T-cell (primary cell): ENCODE measurements at regions of chr2 and their contacts with region 1.

Region 1: DNA sequence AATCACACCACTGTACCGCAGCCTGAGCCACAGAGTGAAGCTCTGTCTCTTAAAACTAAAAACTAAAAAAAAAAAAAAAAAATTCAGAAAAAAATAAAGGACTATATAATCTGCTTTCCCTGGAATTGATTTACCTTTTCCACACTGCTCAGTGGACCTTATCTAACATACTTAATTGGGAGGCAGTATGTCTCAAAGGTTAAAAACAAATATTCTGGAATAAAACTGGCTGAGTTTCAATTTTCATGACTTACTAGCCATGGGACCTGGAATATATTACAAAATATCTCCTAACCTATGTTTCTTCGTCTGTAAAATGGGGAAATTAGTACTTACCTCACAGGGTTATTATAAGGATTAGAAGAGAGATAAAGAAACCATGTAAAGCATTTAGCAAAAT is 11.8 kb downstream of the NCKAP1 start:
- DNase-seq: no peak
- ATAC-seq: no peak
- H3K4me3 ChIP-seq: no peak overlapping the region
- H3K4me3 Mint-ChIP-seq: no peak overlapping the region
- H3K27ac ChIP-seq: no peak overlapping the region
- H3K27ac Mint-ChIP-seq: no peak overlapping the region
- H3K4me1 ChIP-seq: no peaks in the 10 kb centered on the region
- H3K4me1 Mint-ChIP-seq: no peaks in the 10 kb centered on the region
- H3K27me3 ChIP-seq: peaks cover 8 to 11% of the 10 kb centered on the region in 2 experiments
- H3K27me3 Mint-ChIP-seq: peaks cover 12 to 37% of the 10 kb centered on the region in 2 donors

Region 2: DNA sequence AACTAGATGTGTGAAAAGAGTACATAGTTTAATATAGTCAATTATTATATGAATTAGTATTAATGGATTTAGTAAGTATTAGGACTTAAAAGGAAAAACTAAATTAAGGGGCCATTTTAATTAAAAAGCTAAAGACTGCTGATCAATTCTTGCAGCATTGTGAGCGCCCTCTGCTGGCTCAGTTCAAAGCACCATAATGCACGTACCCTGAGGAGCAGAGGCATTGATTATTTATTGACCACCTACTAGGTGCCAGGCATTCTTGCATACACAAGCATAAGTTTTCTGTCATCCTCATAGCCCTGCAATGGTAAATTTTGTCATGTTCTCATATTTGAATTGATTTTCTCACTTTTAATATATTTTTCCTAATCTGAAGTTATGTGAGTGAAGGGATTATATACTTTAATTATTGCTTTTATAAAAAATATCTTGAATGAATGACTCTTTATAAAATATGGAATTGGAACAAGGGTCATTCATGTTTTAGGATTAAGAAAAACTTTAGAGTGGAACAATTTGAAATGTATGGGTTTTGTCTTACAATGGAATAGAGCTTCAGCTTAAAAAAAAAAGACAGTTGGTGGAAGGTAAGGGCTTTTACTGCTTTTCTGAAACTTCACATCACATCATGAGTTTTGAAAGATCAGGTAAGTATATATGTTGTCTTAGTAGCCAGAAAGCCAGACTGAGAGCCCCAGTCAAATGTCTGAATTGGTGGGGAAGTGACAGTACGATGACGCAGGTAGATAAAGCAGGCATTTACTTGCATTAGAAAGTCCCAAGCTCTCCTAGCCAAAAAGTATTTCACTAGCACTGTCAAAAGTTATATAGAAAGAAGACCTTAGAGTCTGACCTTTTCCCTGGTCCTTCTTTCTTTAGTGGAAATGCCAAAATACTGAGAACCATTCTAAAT is 1559.5 kb before region 1 on chr2:
- CTCF ChIA-PET with region 1: no interaction called
- POLR2A ChIA-PET with region 1: interaction called in 1 of 2 experiments, 10 read pairs
- DNase-seq: peak; percentile 42 to 90 (median 72)
- ATAC-seq: peak in 1 of 4 experiments; percentile 79
- H3K4me3 ChIP-seq: peak overlapping the region in 1 of 2 donors; percentile 0
- H3K4me3 Mint-ChIP-seq: peak overlapping the region; percentile 40 to 57 (median 50)
- H3K27ac ChIP-seq: peak overlapping the region; percentile 58
- H3K27ac Mint-ChIP-seq: peak overlapping the region; percentile 23 to 71
- H3K4me1 ChIP-seq: peaks cover 36 to 75% of the 10 kb centered on the region in 2 experiments
- H3K4me1 Mint-ChIP-seq: peaks cover 85 to 91% (median 88%) of the 10 kb centered on the region in 3 donors
- H3K27me3 ChIP-seq: no peaks in the 10 kb centered on the region
- H3K27me3 Mint-ChIP-seq: no peaks in the 10 kb centered on the region

Region 3: GRCh38 chr2:182818541-182819324 is 207.7 kb before region 1 on chr2:
- CTCF ChIA-PET with region 1: no interaction called
- POLR2A ChIA-PET with region 1: no interaction called
- DNase-seq: no peak
- ATAC-seq: no peak
- H3K4me3 ChIP-seq: no peak overlapping the region
- H3K4me3 Mint-ChIP-seq: no peak overlapping the region
- H3K27ac ChIP-seq: no peak overlapping the region
- H3K27ac Mint-ChIP-seq: no peak overlapping the region
- H3K4me1 ChIP-seq: no peaks in the 10 kb centered on the region
- H3K4me1 Mint-ChIP-seq: no peaks in the 10 kb centered on the region
- H3K27me3 ChIP-seq: peaks cover 0 to 7% of the 10 kb centered on the region in 2 experiments
- H3K27me3 Mint-ChIP-seq: peaks cover 7 to 9% of the 10 kb centered on the region in 2 donors

Region 4: GRCh38 chr2:183040604-183041003 is 14.2 kb after region 1 on chr2:
- CTCF ChIA-PET with region 1: interaction called in 1 of 2 experiments, 4 read pairs
- POLR2A ChIA-PET with region 1: interaction called in 1 of 2 experiments, 11 read pairs
- DNase-seq: no peak
- ATAC-seq: no peak
- H3K4me3 ChIP-seq: no peak overlapping the region
- H3K4me3 Mint-ChIP-seq: no peak overlapping the region
- H3K27ac ChIP-seq: no peak overlapping the region
- H3K27ac Mint-ChIP-seq: no peak overlapping the region
- H3K4me1 ChIP-seq: peaks cover 12 to 28% of the 10 kb centered on the region in 2 experiments
- H3K4me1 Mint-ChIP-seq: peaks cover 29 to 33% (median 33%) of the 10 kb centered on the region in 3 donors
- H3K27me3 ChIP-seq: peaks cover 8 to 24% of the 10 kb centered on the region in 2 experiments
- H3K27me3 Mint-ChIP-seq: peaks cover 39 to 43% of the 10 kb centered on the region in 2 donors

Region 5: DNA sequence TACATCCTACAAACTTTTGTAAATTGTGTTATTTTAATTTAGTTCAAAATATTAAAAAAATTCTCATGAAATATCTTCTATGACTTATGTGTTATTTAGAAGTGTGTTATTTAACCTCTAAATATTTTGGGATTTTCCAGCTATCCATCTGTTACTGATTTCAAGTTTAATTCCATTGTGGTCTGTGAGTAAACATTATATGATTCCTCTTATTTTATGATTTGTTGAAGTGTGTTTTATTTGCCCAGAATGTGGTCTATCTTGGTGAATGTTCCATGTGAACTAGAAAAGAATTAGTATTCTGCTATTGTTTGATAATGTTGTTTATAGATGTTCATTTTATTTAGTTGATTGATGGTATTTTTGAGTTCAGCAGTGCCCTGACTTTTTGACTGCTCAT is 1707.9 kb after region 1 on chr2:
- CTCF ChIA-PET with region 1: no interaction called
- POLR2A ChIA-PET with region 1: no interaction called
- DNase-seq: no peak
- ATAC-seq: no peak
- H3K4me3 ChIP-seq: no peak overlapping the region
- H3K4me3 Mint-ChIP-seq: no peak overlapping the region
- H3K27ac ChIP-seq: no peak overlapping the region
- H3K27ac Mint-ChIP-seq: no peak overlapping the region
- H3K4me1 ChIP-seq: no peaks in the 10 kb centered on the region
- H3K4me1 Mint-ChIP-seq: no peaks in the 10 kb centered on the region
- H3K27me3 ChIP-seq: no peaks in the 10 kb centered on the region
- H3K27me3 Mint-ChIP-seq: no peaks in the 10 kb centered on the region